CD8-positive, alpha-beta T cell (primary cell): ENCODE measurements at regions of chr5 and their contacts with region 1.

Region 1: GRCh38 chr5:172469697-172470096 is 15.4 kb upstream of the SH3PXD2B start:
- DNase-seq: no peak
- ATAC-seq: no peak
- H3K4me3 ChIP-seq: no peak overlapping the region
- H3K4me3 Mint-ChIP-seq: no peak overlapping the region
- H3K27ac ChIP-seq: no peak overlapping the region
- H3K27ac Mint-ChIP-seq: no peak overlapping the region
- H3K4me1 ChIP-seq: no peaks in the 10 kb centered on the region
- H3K4me1 Mint-ChIP-seq: no peaks in the 10 kb centered on the region
- H3K27me3 ChIP-seq: no peaks in the 10 kb centered on the region
- H3K27me3 Mint-ChIP-seq: peaks cover 13% of the 10 kb centered on the region
- CTCF ChIP-seq: no peak

Region 2: DNA sequence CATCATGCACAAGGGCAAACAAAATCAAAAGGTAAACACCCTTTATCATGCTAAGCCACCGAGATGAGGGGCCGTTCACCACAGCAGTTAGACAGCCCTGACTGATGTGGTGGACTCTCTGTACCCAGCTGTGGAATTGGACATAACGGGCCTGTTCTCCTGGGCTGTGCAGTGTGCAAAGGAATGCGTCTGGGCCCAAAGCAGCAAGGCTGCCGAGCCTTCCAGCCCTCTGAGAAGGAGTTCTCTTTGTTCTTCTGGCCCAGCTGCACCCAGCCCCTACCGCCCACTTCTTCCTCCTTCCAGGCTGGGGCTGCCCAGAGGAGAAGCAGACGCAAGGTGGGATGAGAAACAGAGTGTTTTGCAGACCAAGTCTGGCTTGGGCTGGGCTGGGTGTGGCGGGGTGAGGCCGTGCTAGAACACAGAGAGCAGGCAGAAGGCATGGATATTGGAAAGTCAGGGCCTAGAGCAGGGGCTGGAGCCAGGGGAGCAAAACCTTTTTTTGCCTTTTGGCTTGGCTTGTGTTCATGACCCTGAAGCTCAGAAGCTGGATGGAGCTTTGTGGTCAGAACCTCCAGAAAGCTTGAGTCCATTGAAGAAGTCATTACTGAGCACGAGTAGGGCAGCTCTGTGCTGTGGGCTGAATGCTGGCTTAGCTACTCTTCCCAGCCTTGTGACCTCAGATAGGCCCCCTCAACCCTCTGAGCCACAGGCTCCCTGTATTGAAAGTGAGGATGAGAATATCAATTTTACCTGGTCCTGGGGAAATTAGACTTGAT is 34.4 kb after region 1 on chr5:
- CTCF ChIA-PET with region 1: no interaction called
- POLR2A ChIA-PET with region 1: no interaction called
- intact Hi-C with region 1: loop called in 1 of 2 experiments (anchors 1 kb)
- DNase-seq: peak in 1 of 9 experiments; percentile 35
- ATAC-seq: no peak
- H3K4me3 ChIP-seq: no peak overlapping the region
- H3K4me3 Mint-ChIP-seq: no peak overlapping the region
- H3K27ac ChIP-seq: no peak overlapping the region
- H3K27ac Mint-ChIP-seq: no peak overlapping the region
- H3K4me1 ChIP-seq: no peaks in the 10 kb centered on the region
- H3K4me1 Mint-ChIP-seq: no peaks in the 10 kb centered on the region
- H3K27me3 ChIP-seq: no peaks in the 10 kb centered on the region
- H3K27me3 Mint-ChIP-seq: peaks cover 26% of the 10 kb centered on the region
- CTCF ChIP-seq: no peak

Region 3: DNA sequence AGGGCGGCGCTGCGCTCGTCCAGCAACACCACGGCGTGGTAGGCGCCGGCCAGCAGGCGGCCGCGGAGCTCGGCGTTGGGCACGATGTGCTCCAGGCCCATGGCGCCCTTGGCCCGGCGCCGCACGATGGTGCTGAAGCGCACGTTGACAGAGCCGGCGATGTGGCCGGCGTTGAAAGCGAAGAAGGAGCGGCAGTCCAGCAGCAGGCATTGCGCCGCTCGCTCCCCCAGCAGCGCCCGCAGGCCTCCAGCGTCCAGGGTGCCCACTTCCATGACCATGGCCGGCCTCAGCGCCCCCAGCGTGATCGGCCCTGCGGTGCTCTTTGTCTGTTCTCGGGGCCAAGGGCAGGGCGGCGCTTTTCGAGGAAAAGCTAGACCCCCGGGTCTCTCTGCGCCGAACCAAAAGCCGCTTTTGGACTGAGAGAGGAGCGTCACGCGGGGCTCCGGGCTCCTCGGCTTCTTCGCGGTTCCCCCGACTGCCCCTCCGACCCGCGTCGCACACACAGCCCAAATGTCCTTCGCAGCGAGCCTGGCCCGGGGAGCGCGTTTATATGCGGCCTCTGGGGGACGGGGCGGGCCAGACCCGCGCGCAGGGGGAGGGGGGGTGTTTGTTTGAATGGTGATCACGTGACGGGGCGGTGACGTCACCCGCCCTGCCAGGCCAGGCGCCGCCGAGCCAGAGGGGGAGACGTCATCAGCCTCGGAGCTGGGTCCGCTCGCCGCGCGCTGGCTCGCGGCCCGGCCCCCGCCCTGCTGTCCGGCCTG is 301.2 kb after region 1 on chr5 and contains the start of gene DUSP1:
- CTCF ChIA-PET with region 1: no interaction called
- POLR2A ChIA-PET with region 1: no interaction called
- intact Hi-C with region 1: no loop called
- DNase-seq: peak; percentile 97 to 99 (median 98)
- ATAC-seq: peak; percentile 54
- H3K4me3 ChIP-seq: peak within 1 kb of the TSS; percentile 85 to 89
- H3K4me3 Mint-ChIP-seq: peak within 1 kb of the TSS; percentile 95
- H3K27ac ChIP-seq: peak within 1 kb of the TSS; percentile 99 to 100
- H3K27ac Mint-ChIP-seq: peak within 1 kb of the TSS; percentile 98
- H3K4me1 ChIP-seq: peaks cover 36% of the 10 kb centered on the region
- H3K4me1 Mint-ChIP-seq: peaks cover 58% of the 10 kb centered on the region
- H3K27me3 ChIP-seq: no peaks in the 10 kb centered on the region
- H3K27me3 Mint-ChIP-seq: no peaks in the 10 kb centered on the region
- CTCF ChIP-seq: no peak
- total RNA-seq, gene DUSP1: 745 to 767 TPM